Caco-2 (cell line): ENCODE measurements at regions of chr12 and their contacts with region 1.

Region 1: GRCh38 chr12:70242695-70243509 is at the start of gene CNOT2:
- DNase-seq: peak; percentile 91 to 93
- H3K4me3 ChIP-seq: peak within 1 kb of the TSS; percentile 78
- H3K4me3 Mint-ChIP-seq: peak within 1 kb of the TSS; percentile 99
- H3K27ac Mint-ChIP-seq: peak within 1 kb of the TSS; percentile 99
- H3K4me1 ChIP-seq: peaks cover 22% of the 10 kb centered on the region
- H3K4me1 Mint-ChIP-seq: peaks cover 20% of the 10 kb centered on the region
- H3K27me3 ChIP-seq: no peaks in the 10 kb centered on the region
- H3K27me3 Mint-ChIP-seq: no peaks in the 10 kb centered on the region
- CTCF ChIP-seq: no peak
- total RNA-seq, gene CNOT2: 83.5 and 85.8 TPM in 2 replicates

Region 2: GRCh38 chr12:69900720-69901131 is 342.2 kb before region 1 on chr12:
- CTCF ChIA-PET with region 1: no interaction called
- POLR2A ChIA-PET with region 1: no interaction called
- intact Hi-C with region 1: loop called (anchors 10 kb)
- DNase-seq: peak; percentile 71 to 81
- H3K4me3 ChIP-seq: no peak overlapping the region
- H3K4me3 Mint-ChIP-seq: no peak overlapping the region
- H3K27ac Mint-ChIP-seq: no peak overlapping the region
- H3K4me1 ChIP-seq: no peaks in the 10 kb centered on the region
- H3K4me1 Mint-ChIP-seq: no peaks in the 10 kb centered on the region
- H3K27me3 ChIP-seq: no peaks in the 10 kb centered on the region
- H3K27me3 Mint-ChIP-seq: peaks cover 2% of the 10 kb centered on the region
- CTCF ChIP-seq: peak; percentile 60 to 89

Region 3: GRCh38 chr12:70217416-70217815 is 25.5 kb before region 1 on chr12:
- CTCF ChIA-PET with region 1: no interaction called
- POLR2A ChIA-PET with region 1: no interaction called
- intact Hi-C with region 1: loop called (anchors 2 kb)
- DNase-seq: no peak
- H3K4me3 ChIP-seq: no peak overlapping the region
- H3K4me3 Mint-ChIP-seq: no peak overlapping the region
- H3K27ac Mint-ChIP-seq: no peak overlapping the region
- H3K4me1 ChIP-seq: no peaks in the 10 kb centered on the region; the same call in 1 of the 2 replicates
- H3K4me1 Mint-ChIP-seq: no peaks in the 10 kb centered on the region
- H3K27me3 ChIP-seq: no peaks in the 10 kb centered on the region
- H3K27me3 Mint-ChIP-seq: no peaks in the 10 kb centered on the region
- CTCF ChIP-seq: no peak

Region 4: GRCh38 chr12:70227911-70228310 is 15.0 kb before region 1 on chr12:
- CTCF ChIA-PET with region 1: no interaction called
- POLR2A ChIA-PET with region 1: no interaction called
- intact Hi-C with region 1: no loop called
- DNase-seq: no peak
- H3K4me3 ChIP-seq: no peak overlapping the region
- H3K4me3 Mint-ChIP-seq: no peak overlapping the region
- H3K27ac Mint-ChIP-seq: no peak overlapping the region
- H3K4me1 ChIP-seq: no peaks in the 10 kb centered on the region
- H3K4me1 Mint-ChIP-seq: no peaks in the 10 kb centered on the region
- H3K27me3 ChIP-seq: no peaks in the 10 kb centered on the region
- H3K27me3 Mint-ChIP-seq: no peaks in the 10 kb centered on the region
- CTCF ChIP-seq: no peak

Region 5: DNA sequence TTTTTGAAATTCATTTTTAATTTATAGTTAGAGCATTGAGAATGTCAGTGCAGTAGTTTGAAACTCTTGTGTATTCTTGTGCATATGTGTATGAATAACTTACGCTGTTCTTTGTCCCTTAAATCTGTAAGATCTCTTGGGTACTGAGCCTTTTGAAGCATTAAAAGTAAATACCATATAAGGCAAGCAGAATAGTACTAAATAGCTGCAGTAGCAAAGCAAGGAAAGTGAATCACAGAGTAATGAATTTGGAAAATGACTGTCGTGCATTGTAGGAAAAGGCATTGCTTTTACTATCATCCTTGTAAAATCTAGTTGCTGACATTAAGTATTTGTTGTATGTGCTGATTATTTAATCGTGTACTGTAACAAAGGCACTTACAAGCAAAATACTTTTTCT is 12.4 kb after region 1 on chr12:
- CTCF ChIA-PET with region 1: no interaction called
- POLR2A ChIA-PET with region 1: no interaction called
- intact Hi-C with region 1: no loop called
- DNase-seq: no peak
- H3K4me3 ChIP-seq: no peak overlapping the region
- H3K4me3 Mint-ChIP-seq: no peak overlapping the region
- H3K27ac Mint-ChIP-seq: no peak overlapping the region
- H3K4me1 ChIP-seq: 0 out of 2 replicates have a peak, but pooled peaks cover 4% of the 10 kb centered on the region
- H3K4me1 Mint-ChIP-seq: peaks cover 20% of the 10 kb centered on the region
- H3K27me3 ChIP-seq: no peaks in the 10 kb centered on the region
- H3K27me3 Mint-ChIP-seq: no peaks in the 10 kb centered on the region
- CTCF ChIP-seq: no peak

Region 6: DNA sequence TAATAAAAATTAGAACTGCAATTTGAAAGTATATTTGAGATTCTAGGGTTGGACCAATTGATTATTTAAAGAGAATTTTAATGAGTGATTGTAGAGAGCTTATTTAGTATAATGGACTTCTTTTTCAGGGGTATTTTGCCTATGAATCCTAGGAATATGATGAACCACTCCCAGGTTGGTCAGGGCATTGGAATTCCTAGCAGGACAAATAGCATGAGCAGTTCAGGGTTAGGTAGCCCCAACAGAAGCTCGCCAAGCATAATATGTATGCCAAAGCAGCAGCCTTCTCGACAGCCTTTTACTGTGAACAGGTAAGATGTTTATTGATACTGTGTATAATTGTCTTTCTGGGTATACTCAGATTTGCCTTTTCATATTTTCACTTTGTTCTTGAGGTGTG is 87.3 kb after region 1 on chr12:
- CTCF ChIA-PET with region 1: no interaction called
- POLR2A ChIA-PET with region 1: no interaction called
- intact Hi-C with region 1: no loop called
- DNase-seq: no peak
- H3K4me3 ChIP-seq: no peak overlapping the region
- H3K4me3 Mint-ChIP-seq: no peak overlapping the region
- H3K27ac Mint-ChIP-seq: no peak overlapping the region
- H3K4me1 ChIP-seq: peaks cover 3% of the 10 kb centered on the region; the same call in 1 of the 2 replicates
- H3K4me1 Mint-ChIP-seq: no peaks in the 10 kb centered on the region
- H3K27me3 ChIP-seq: no peaks in the 10 kb centered on the region
- H3K27me3 Mint-ChIP-seq: no peaks in the 10 kb centered on the region
- CTCF ChIP-seq: no peak

Region 7: GRCh38 chr12:70365648-70366518 is 123.0 kb after region 1 on chr12 and contains the start of gene KCNMB4:
- CTCF ChIA-PET with region 1: no interaction called
- POLR2A ChIA-PET with region 1: no interaction called
- intact Hi-C with region 1: loop called (anchors 5 kb)
- DNase-seq: peak; percentile 69 to 83
- H3K4me3 ChIP-seq: peak within 1 kb of the TSS; percentile 53
- H3K4me3 Mint-ChIP-seq: peak within 1 kb of the TSS; percentile 94
- H3K27ac Mint-ChIP-seq: peak within 1 kb of the TSS; percentile 58
- H3K4me1 ChIP-seq: peaks cover 10% of the 10 kb centered on the region; the same call in 1 of the 2 replicates
- H3K4me1 Mint-ChIP-seq: no peaks in the 10 kb centered on the region
- H3K27me3 ChIP-seq: no peaks in the 10 kb centered on the region
- H3K27me3 Mint-ChIP-seq: peaks cover 11% of the 10 kb centered on the region
- CTCF ChIP-seq: no peak
- total RNA-seq, gene KCNMB4: 0.23 TPM in 1 of 2 replicates, not detected in the other